ENCODE measurements at regions of chrX and their contacts with region 1.

Region 1: GRCh38 chrX:149699761-149700160 is 12.1 kb upstream of the MAGEA11 start:
- DNase-seq: no peak
- H3K4me3 ChIP-seq: no peak overlapping the region
- H3K27ac ChIP-seq: no peak overlapping the region
- H3K4me1 ChIP-seq: no peaks in the 10 kb centered on the region
- H3K27me3 ChIP-seq: no peaks in the 10 kb centered on the region
- CTCF ChIP-seq: no peak

Region 2: GRCh38 chrX:149364784-149365460 is 334.8 kb before region 1 on chrX:
- intact Hi-C with region 1: no loop called
- DNase-seq: no peak
- H3K4me3 ChIP-seq: no peak overlapping the region
- H3K27ac ChIP-seq: no peak overlapping the region
- H3K4me1 ChIP-seq: no peaks in the 10 kb centered on the region
- H3K27me3 ChIP-seq: no peaks in the 10 kb centered on the region
- CTCF ChIP-seq: no peak

Region 3: GRCh38 chrX:149611623-149612175 is 88.1 kb before region 1 on chrX:
- intact Hi-C with region 1: loop called (anchors 10 kb)
- DNase-seq: no peak
- H3K4me3 ChIP-seq: no peak overlapping the region
- H3K27ac ChIP-seq: no peak overlapping the region
- H3K4me1 ChIP-seq: no peaks in the 10 kb centered on the region
- H3K27me3 ChIP-seq: no peaks in the 10 kb centered on the region
- CTCF ChIP-seq: no peak

Measured in ascending aorta (tissue), 2 donors.